Esophagus squamous epithelium (tissue), 5 donors: ENCODE measurements at regions of chr1 and their contacts with region 1.

Region 1: GRCh38 chr1:16366722-16367257 is at the start of gene SZRD1:
- DNase-seq: peak; percentile 95
- H3K4me3 ChIP-seq: peak within 1 kb of the TSS; percentile 64 to 97 (median 90)
- H3K27ac ChIP-seq: peak within 1 kb of the TSS; percentile 96 to 100 (median 100)
- H3K4me1 ChIP-seq: peaks cover 15 to 75% (median 51%) of the 10 kb centered on the region in 3 donors
- H3K27me3 ChIP-seq: no peaks in the 10 kb centered on the region
- CTCF ChIP-seq: peak in 1 of 6 experiments; percentile 33
- POLR2A ChIP-seq: peak in 1 of 4 donors; percentile 72
- total RNA-seq, gene SZRD1: 51.7 to 65.0 (median 58.5) TPM

Region 2: GRCh38 chr1:16187748-16188401 is 178.9 kb before region 1 on chr1:
- intact Hi-C with region 1: loop called (anchors 10 kb)
- DNase-seq: no peak
- H3K4me3 ChIP-seq: no peak overlapping the region
- H3K27ac ChIP-seq: peak overlapping the region; percentile 75 to 93 (median 86)
- H3K4me1 ChIP-seq: peaks cover 51 to 95% (median 62%) of the 10 kb centered on the region in 3 donors
- H3K27me3 ChIP-seq: peaks cover 0 to 6% (median 0%) of the 10 kb centered on the region in 4 donors
- CTCF ChIP-seq: peak; percentile 96 to 99 (median 98)
- POLR2A ChIP-seq: no peak